ENCODE measurements at regions of chr13 and their contacts with region 1.

Region 1: DNA sequence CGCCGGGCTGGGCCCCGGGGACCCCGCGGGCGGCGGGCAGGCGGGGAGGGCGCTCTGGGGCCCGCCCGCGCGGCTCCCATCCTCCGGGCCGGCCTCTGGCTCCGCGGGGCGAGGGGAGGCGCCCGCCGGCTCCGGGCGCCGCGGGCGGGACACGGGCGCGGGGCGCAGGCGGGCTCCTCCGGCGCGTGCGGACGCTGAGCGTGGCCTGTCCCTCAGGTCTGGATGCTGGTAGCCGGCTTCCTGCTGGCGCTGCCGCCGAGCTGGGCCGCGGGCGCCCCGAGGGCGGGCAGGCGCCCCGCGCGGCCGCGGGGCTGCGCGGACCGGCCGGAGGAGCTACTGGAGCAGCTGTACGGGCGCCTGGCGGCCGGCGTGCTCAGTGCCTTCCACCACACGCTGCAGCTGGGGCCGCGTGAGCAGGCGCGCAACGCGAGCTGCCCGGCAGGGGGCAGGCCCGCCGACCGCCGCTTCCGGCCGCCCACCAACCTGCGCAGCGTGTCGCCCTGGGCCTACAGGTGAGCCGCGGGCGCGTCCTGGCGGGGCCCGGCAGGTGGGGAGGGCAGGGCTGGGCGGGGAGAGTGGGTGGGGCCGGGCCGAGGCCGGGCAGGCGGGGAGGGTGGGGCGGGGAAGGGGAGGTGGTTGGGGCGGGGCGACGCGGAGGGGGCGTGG is 414 bp downstream of the IL17D start:
- DNase-seq: peak; percentile 87
- H3K4me3 ChIP-seq: peak overlapping the region; percentile 29 to 66 (median 42)
- H3K27ac ChIP-seq: peak overlapping the region in 3 of 4 donors; percentile 37 to 74 (median 55)
- H3K4me1 ChIP-seq: peaks cover 0 to 16% (median 12%) of the 10 kb centered on the region in 4 donors
- H3K27me3 ChIP-seq: peaks cover 25% of the 10 kb centered on the region
- CTCF ChIP-seq: peak in 4 of 5 experiments; percentile 44 to 66 (median 50)
- EP300 ChIP-seq: no peak
- POLR2A ChIP-seq: no peak

Region 2: GRCh38 chr13:20495082-20496023 is 208.6 kb before region 1 on chr13:
- in situ Hi-C with region 1: loop called (anchors 10 to 25 kb)
- intact Hi-C with region 1: no loop called
- DNase-seq: peak; percentile 73
- H3K4me3 ChIP-seq: no peak overlapping the region
- H3K27ac ChIP-seq: peak overlapping the region in 2 of 4 donors; percentile 25 to 34
- H3K4me1 ChIP-seq: peaks cover 5 to 13% (median 8%) of the 10 kb centered on the region in 4 donors
- H3K27me3 ChIP-seq: no peaks in the 10 kb centered on the region
- CTCF ChIP-seq: peak; percentile 91 to 98 (median 94)
- EP300 ChIP-seq: no peak
- POLR2A ChIP-seq: peak; percentile 12

Region 3: GRCh38 chr13:20672772-20673171 is 31.1 kb before region 1 on chr13:
- in situ Hi-C with region 1: no loop called
- intact Hi-C with region 1: no loop called
- DNase-seq: no peak
- H3K4me3 ChIP-seq: no peak overlapping the region
- H3K27ac ChIP-seq: no peak overlapping the region
- H3K4me1 ChIP-seq: no peaks in the 10 kb centered on the region
- H3K27me3 ChIP-seq: no peaks in the 10 kb centered on the region
- CTCF ChIP-seq: no peak
- EP300 ChIP-seq: no peak
- POLR2A ChIP-seq: no peak

Region 4: DNA sequence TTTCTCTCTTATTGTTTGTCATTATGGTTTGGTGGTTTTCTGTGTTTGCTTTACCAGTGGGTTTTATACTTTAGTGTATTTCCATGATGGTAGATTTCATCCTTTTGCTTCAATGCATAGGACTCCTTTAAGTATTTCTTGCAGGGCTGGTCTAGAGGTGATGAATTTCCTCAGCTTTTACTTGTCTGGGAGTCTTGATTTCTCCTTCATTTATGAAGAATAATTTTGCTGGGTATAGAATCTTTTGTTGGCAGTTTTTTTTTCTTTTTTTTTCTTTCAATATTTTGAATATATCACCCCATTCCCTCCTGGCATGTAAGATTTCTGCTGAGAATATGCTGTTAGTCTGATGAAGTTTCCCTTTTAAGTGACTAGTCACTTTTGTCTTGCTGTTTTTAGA is 50.1 kb after region 1 on chr13:
- in situ Hi-C with region 1: no loop called
- intact Hi-C with region 1: no loop called
- DNase-seq: no peak
- H3K4me3 ChIP-seq: no peak overlapping the region
- H3K27ac ChIP-seq: no peak overlapping the region
- H3K4me1 ChIP-seq: no peaks in the 10 kb centered on the region
- H3K27me3 ChIP-seq: no peaks in the 10 kb centered on the region
- CTCF ChIP-seq: no peak
- EP300 ChIP-seq: no peak
- POLR2A ChIP-seq: no peak

Region 5: DNA sequence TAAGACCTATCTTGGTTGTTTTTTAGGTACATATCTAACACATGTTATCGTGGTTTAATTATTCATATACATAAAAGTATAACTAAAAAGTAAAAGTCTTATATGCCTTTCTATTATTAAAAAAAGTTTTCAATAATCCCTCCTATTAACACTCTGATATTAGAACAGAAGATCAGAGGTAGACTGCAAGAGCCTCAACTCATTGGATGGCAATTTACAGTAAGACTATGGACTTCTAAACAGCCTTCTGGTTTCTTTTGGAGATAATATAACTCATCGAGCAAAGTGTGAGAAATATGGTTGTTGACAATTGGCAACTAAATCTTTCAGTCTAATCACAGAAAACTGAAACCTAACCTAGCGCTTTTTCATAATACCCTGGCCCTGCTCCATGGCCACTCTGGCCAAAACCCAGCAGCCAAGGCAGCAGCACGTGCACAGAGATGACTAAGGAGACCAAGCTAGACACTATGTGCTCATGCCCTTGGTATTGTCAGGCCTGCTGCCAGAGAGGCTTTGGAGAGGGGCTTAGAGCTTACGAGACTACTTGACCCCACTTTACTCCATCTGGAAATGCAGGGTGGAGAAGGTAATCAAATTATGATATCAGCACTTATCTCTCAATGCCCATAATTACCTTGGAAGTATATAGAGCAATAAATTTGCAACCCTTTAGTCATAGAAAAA is 110.5 kb after region 1 on chr13:
- in situ Hi-C with region 1: loop called in 1 of 4 experiments (anchors 25 kb)
- intact Hi-C with region 1: no loop called
- DNase-seq: peak; percentile 60
- H3K4me3 ChIP-seq: no peak overlapping the region
- H3K27ac ChIP-seq: peak overlapping the region in 3 of 4 donors; percentile 45 to 63 (median 55)
- H3K4me1 ChIP-seq: peaks cover 0 to 16% (median 9%) of the 10 kb centered on the region in 4 donors
- H3K27me3 ChIP-seq: no peaks in the 10 kb centered on the region
- CTCF ChIP-seq: no peak
- EP300 ChIP-seq: no peak
- POLR2A ChIP-seq: no peak

Region 6: DNA sequence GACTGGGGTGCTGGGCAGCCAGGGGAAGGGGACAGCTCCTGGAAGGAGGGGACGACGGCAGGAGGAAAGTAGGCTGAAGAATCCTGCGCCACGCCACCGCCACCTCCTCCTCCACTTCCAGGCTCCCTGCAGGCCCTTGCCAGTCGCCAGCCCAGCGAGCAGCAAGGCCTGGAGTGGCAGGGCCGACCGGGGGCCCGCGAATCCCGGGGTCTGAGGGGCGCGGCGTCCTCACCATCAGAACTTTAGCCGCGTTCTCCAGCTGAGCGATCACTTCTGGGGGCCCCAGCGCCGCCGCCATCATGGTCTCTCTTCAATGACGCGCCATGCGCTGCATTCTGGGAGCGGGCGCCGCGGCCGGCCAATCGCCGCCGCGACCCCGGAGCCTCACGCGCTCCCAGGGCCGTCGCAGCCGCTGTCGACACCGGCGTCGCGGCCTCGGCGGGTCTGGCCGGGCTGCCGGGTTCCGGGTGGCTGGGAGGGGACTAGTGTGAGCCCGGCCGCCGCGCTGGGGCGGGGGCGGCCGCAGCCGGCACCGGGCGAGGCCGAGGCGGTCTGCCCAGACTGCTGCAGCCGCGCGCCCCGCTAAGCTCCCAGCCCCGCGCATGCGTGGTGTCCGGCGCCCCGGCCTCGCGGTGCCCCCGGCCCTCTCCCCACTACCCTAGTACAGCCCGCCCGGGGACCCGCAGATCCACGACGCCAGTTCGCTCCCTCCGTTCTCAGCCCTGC is 198.7 kb after region 1 on chr13 and contains the start of gene XPO4:
- in situ Hi-C with region 1: loop called in 2 of 4 experiments (anchors 25 kb)
- intact Hi-C with region 1: no loop called
- DNase-seq: peak; percentile 81
- H3K4me3 ChIP-seq: peak within 1 kb of the TSS; percentile 54 to 97 (median 90)
- H3K27ac ChIP-seq: peak within 1 kb of the TSS; percentile 88 to 95 (median 93)
- H3K4me1 ChIP-seq: peaks cover 8 to 19% (median 11%) of the 10 kb centered on the region in 4 donors
- H3K27me3 ChIP-seq: no peaks in the 10 kb centered on the region
- CTCF ChIP-seq: no peak
- EP300 ChIP-seq: no peak
- POLR2A ChIP-seq: peak; percentile 57
- total RNA-seq, gene XPO4: 11.7 to 25.2 (median 13.3) TPM

Region 7: DNA sequence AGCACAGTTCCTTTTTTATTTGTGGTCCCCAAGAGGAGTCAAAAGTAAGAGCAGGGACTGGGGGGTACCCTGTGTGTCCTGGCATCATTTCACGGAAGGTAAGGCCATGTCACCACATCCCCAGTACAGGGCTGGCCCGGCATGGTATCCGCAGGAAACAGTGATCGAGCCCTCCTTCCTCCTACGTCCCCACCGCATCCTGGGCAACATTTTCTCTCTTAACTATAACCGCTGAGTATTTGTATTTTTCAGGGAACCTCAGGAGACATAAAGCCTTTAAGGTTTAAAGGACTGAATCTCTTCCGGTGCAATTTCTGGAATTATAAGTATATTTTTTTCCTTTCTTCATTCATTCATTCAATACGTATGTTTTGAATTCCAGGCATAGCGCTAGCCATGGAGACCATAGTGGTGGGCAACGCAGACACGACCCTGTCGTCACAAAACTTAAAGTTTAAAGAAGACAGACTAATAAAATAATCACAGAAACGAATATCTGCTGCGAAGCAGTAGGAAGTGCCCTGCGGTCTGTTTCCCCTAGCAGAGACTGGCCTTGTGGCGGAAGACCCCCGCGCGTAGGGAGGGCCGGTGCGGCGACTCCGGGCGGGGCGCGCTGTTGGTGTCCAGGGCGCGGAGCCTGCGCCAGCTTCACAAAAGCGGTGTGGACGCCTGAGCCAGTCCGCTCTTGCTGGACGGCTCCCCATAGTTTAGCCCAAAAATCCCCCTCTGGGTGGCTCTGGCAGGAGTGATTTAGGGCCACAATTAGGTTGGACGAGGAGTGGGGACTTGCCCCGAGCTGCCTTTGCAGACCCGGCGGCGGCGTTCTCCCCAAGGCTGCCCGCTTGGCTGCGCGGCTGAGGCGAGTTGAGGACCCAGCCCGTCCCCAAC is 371.3 kb after region 1 on chr13:
- in situ Hi-C with region 1: loop called in 1 of 4 experiments (anchors 25 kb)
- intact Hi-C with region 1: no loop called
- DNase-seq: no peak
- H3K4me3 ChIP-seq: peak overlapping the region; percentile 6 to 46 (median 33)
- H3K27ac ChIP-seq: peak overlapping the region; percentile 40 to 56 (median 49)
- H3K4me1 ChIP-seq: peaks cover 0 to 11% (median 5%) of the 10 kb centered on the region in 4 donors
- H3K27me3 ChIP-seq: peaks cover 27% of the 10 kb centered on the region
- CTCF ChIP-seq: no peak
- EP300 ChIP-seq: no peak
- POLR2A ChIP-seq: no peak